ENCODE measurements at regions of chr10 and their contacts with region 1.

Region 1: GRCh38 chr10:102225646-102226541 is at the start of gene ELOVL3:
- DNase-seq: peak; percentile 90 to 96 (median 91)
- ATAC-seq: peak; percentile 92 to 96 (median 94)
- H3K4me3 ChIP-seq: peak within 1 kb of the TSS in 2 of 4 donors; percentile 13 to 31
- H3K27ac ChIP-seq: peak within 1 kb of the TSS in 2 of 4 donors; percentile 24 to 62
- H3K4me1 ChIP-seq: peaks cover 0 to 10% (median 0%) of the 10 kb centered on the region in 3 donors
- H3K27me3 ChIP-seq: no peaks in the 10 kb centered on the region
- CTCF ChIP-seq: no peak
- total RNA-seq, gene ELOVL3: not detected

Region 2: GRCh38 chr10:101968940-101969321 is 257.0 kb before region 1 on chr10:
- intact Hi-C with region 1: no loop called
- DNase-seq: no peak
- ATAC-seq: no peak
- H3K4me3 ChIP-seq: no peak overlapping the region
- H3K27ac ChIP-seq: no peak overlapping the region
- H3K4me1 ChIP-seq: no peaks in the 10 kb centered on the region
- H3K27me3 ChIP-seq: no peaks in the 10 kb centered on the region
- CTCF ChIP-seq: no peak

Region 3: GRCh38 chr10:102112210-102112817 is 113.6 kb before region 1 on chr10:
- intact Hi-C with region 1: no loop called
- DNase-seq: no peak
- ATAC-seq: no peak
- H3K4me3 ChIP-seq: no peak overlapping the region
- H3K27ac ChIP-seq: no peak overlapping the region
- H3K4me1 ChIP-seq: peaks cover 5 to 34% (median 15%) of the 10 kb centered on the region in 3 donors
- H3K27me3 ChIP-seq: no peaks in the 10 kb centered on the region
- CTCF ChIP-seq: no peak

Region 4: DNA sequence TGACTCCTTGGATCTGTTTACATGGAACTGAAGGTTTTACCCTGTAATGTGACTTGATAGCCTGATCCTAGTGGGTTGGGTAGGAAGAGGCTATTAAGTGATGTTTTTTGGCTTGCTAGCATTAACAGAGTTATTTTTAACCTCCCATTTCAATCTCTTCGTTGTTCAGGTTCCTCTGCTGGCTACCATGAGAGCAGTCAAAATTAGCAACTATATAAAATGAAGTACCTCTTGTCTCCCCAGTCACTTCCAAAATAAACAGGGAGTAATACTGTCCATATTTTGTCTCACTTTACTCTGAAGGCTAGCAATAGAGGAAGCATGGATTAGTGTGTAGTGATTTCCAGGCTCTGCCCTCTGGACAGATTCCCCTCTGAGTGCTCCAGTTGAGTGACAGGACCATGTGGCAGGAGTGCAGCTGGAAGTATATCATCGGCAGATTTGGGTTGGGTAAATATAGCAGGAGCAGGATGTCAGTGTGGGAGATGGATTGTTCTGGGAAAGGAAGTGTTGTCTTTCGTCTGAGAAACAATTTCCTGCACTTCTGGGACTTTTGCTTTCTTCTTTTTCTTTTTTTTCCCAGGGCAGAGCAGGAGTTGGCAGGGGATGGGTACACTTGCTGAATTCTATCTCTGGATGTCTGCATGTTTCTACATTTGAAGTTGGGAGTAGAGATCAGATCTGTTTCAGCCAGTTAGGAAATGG is 54.7 kb after region 1 on chr10:
- intact Hi-C with region 1: loop called in 1 of 3 experiments (anchors 10 kb)
- DNase-seq: no peak
- ATAC-seq: peak in 3 of 4 donors; percentile 70 to 81 (median 72)
- H3K4me3 ChIP-seq: no peak overlapping the region
- H3K27ac ChIP-seq: peak overlapping the region in 2 of 4 donors; percentile 21 to 30
- H3K4me1 ChIP-seq: peaks cover 8 to 14% (median 10%) of the 10 kb centered on the region in 3 donors
- H3K27me3 ChIP-seq: no peaks in the 10 kb centered on the region
- CTCF ChIP-seq: no peak

Region 5: DNA sequence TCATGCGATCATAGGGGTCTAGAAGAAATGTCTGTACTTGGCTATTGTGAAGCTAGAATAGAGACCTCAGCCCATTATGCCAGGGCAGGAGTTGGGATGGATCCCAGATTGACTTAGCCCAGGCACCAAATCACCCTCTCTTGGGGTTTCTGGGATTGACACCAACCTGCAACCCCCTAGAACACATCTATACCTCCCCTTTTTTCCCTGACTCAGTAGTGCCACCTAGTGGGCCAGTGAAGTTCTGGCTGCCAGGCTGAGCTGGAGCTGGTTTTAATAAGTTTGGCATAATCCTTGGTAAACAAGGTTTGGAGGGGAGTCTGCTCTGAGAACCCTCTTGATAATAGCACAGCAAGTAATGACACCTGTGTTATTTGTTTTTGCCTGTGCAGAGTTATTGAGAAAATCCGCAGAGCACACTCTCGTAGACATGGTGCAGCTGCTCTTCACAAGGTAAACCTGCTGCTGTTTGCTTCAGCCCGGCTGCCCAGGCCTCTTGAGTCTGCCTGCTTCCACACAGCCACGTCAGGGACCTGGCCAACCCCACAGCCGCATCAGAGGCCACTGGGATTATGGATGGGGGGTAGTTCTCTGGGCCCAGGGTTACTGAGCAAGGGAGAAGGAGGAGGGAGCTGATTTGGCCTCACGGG is 126.3 kb after region 1 on chr10:
- intact Hi-C with region 1: loop called in 2 of 3 experiments (anchors 5 kb)
- DNase-seq: peak in 5 of 6 donors; percentile 35 to 77 (median 60)
- ATAC-seq: peak; percentile 57 to 82 (median 78)
- H3K4me3 ChIP-seq: no peak overlapping the region
- H3K27ac ChIP-seq: no peak overlapping the region
- H3K4me1 ChIP-seq: no peaks in the 10 kb centered on the region
- H3K27me3 ChIP-seq: no peaks in the 10 kb centered on the region
- CTCF ChIP-seq: peak; percentile 71 to 89 (median 84)

Region 6: DNA sequence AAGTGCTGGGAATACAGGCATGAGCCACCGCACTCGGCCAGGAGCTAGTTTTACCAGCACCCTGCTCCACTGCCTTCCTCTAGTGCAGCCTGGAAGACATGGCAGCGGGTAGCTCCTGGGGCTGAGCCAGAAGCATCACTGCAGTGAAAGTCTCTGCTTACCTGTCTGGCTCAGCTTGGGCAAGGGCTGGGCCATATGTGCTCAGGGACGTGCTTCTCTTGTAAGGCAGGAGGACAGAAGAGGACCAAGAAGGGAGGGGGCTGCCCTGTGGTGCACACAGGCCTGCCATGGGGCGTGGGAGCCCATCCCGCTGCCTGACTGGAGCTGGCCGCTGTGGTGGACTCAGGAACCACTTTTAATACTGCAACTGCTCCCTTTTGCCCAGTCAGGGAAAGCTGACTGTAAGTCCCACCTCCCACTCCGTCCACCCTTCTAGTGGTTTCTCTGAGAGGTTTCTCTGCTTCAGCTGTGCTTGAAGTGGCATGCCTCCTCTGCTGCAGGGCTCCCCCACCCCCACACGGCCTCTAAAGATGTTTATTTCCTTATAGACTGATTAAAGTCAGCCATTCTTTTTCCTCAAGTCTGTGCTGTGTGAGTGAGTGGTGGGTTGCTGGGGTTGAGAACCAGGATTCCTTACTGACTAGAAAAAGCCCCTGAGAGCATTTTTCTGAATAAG is 250.7 kb after region 1 on chr10:
- intact Hi-C with region 1: loop called in 1 of 3 experiments (anchors 5 kb)
- DNase-seq: peak in 1 of 6 donors; percentile 21
- ATAC-seq: no peak
- H3K4me3 ChIP-seq: no peak overlapping the region
- H3K27ac ChIP-seq: no peak overlapping the region
- H3K4me1 ChIP-seq: no peaks in the 10 kb centered on the region
- H3K27me3 ChIP-seq: no peaks in the 10 kb centered on the region
- CTCF ChIP-seq: no peak

Measured in pancreas (tissue), 10 donors.